ENCODE measurements at regions of chr4 and their contacts with region 1.

Region 1: DNA sequence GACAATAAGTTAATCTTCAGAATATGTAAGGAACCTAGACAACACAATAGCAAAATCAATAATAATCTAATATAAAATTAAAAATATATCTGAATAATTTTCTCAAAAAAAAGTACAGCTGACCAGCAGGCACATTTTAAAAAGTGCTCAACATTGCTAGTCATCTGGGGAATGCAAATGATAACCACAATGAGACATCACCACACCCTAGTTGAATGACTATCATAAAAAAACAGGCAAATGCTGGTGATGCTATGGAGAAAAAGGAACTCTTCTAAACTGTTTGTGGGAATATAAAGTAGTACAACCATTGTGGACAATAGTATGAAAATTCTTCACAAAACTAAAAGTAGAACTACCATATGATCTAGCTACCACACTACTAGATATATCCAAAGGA is 956.9 kb upstream of the NDST4 start:
- DNase-seq: no peak
- H3K4me3 ChIP-seq: no peak overlapping the region
- H3K27ac ChIP-seq: no peak overlapping the region
- H3K4me1 ChIP-seq: no peaks in the 10 kb centered on the region
- H3K27me3 ChIP-seq: no peaks in the 10 kb centered on the region
- CTCF ChIP-seq: no peak

Region 2: DNA sequence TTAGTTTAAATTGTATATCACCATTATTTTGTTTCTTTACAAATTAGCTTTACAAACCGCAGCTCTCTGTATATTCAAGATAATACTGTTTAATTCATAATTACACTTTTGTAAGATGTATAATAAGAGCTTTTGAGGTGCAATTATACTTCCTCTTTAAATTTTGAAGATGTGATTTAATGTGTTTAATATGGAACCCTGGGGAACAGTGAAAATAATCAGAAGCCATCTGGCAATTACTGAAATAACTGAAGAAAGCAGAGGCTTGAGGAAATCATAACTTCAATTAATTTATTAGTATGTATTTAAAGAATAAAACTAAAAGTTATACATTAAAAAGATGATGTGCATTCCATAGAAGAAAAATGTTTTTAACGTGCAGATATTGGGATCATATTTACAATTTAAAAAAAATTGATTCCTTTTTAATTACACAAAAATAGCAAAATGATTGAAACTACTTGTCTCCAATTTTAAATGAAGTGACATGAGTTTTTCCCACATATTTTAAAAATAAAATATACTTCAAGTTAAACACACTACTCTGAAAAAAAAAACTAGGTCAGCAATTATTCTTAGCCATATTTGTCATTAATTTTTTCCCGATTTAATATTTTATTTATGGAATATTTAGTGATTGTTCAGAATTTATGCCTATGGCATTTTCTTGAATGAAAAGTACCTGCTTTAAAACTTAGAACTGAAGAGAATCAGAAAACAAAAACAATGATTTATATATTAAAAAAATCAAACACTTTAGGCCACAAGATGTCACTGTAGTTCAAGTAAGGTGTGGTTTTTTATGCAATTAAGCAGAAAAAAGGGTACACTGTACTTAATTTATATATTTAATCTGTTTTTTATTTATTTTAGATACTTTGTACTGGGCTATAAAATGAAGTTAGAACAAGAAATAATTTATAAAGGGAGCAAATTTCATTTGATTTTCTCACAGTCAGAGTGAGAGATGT is 14.1 kb before region 1 on chr4:
- CTCF ChIA-PET with region 1: interaction called, 16 read pairs
- POLR2A ChIA-PET with region 1: no interaction called
- intact Hi-C with region 1: no loop called
- DNase-seq: peak; percentile 74
- H3K4me3 ChIP-seq: no peak overlapping the region
- H3K27ac ChIP-seq: peak overlapping the region; percentile 68
- H3K4me1 ChIP-seq: peaks cover 15% of the 10 kb centered on the region
- H3K27me3 ChIP-seq: no peaks in the 10 kb centered on the region
- CTCF ChIP-seq: peak; percentile 64

Measured in A673 (cell line).